Ascending aorta (tissue), 2 donors: ENCODE measurements at regions of chr1 and their contacts with region 1.

Region 1: DNA sequence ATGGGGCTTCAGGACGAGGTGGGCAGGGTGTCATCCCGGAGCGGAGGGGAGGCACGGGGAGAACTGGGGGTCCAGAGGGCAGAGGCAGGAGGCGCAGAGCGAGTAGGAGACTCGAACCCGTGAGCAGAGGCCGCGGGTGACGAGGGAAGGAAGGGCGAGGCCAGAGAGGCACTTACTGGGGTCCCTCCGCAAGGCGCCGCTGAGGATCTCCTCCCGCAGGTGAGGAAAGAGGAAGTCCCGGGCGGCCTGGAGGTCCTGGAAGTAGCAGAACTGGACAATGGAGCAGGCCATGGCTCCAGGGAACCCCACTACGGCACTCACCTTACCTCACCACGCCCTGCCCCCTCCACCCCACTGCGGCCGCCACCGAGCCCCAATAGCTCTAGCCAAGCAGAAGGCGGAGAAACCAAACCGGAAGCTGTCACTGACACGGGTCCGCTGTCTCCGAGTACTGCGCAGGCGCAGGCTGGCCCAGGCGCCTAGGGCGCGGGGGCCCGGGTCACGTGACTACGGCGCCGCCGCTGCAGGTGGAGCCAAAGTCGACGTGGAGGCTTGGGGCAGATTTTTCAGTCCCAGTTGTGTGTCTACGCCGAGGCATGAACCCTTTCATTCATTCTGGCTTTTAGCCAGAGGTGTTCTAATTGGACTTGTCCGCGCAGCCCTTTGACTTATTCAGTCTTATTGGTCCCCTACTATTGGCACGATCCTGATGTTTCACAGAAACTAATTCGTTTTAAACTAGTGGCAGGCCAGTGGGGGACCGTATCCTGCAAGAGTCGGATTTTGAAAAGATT is at the start of gene RAB3GAP2:
- DNase-seq: peak; percentile 80 to 97
- H3K4me3 ChIP-seq: peak within 1 kb of the TSS; percentile 79 to 89
- H3K27ac ChIP-seq: peak within 1 kb of the TSS; percentile 76 to 85
- H3K4me1 ChIP-seq: peaks cover 0 to 13% of the 10 kb centered on the region in 2 donors
- H3K27me3 ChIP-seq: no peaks in the 10 kb centered on the region
- CTCF ChIP-seq: no peak
- total RNA-seq, gene RAB3GAP2: 9.8 TPM

Region 2: GRCh38 chr1:220089650-220090556 is 182.3 kb before region 1 on chr1 and contains the start of gene BPNT1:
- intact Hi-C with region 1: loop called (anchors 2 kb)
- DNase-seq: peak; percentile 74 to 97
- H3K4me3 ChIP-seq: peak within 1 kb of the TSS; percentile 56 to 71
- H3K27ac ChIP-seq: peak within 1 kb of the TSS in 1 of 2 donors; percentile 59
- H3K4me1 ChIP-seq: peaks cover 0 to 2% of the 10 kb centered on the region in 2 donors
- H3K27me3 ChIP-seq: no peaks in the 10 kb centered on the region
- CTCF ChIP-seq: no peak
- total RNA-seq, gene BPNT1: 5.4 TPM

Region 3: DNA sequence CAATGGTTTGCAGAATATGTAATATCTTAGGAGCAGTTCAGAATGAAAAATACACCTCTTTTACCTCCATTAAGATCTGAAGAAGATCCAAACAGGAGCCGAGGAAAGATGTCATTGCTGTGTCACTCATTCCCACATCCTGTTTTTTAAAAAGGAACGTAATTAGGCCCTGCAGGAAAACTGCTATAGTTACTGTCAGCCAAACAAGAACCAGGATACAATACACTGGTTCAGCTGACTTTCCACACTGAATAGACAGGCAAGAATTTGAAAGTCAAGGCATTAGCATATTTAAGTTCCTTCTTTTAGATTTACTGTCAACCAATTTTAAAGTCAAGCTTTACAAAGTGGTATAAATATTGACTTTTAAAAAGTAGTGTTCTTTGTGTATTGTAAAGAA is 114.5 kb before region 1 on chr1:
- intact Hi-C with region 1: no loop called
- DNase-seq: no peak
- H3K4me3 ChIP-seq: no peak overlapping the region
- H3K27ac ChIP-seq: no peak overlapping the region
- H3K4me1 ChIP-seq: no peaks in the 10 kb centered on the region
- H3K27me3 ChIP-seq: no peaks in the 10 kb centered on the region
- CTCF ChIP-seq: no peak

Region 4: DNA sequence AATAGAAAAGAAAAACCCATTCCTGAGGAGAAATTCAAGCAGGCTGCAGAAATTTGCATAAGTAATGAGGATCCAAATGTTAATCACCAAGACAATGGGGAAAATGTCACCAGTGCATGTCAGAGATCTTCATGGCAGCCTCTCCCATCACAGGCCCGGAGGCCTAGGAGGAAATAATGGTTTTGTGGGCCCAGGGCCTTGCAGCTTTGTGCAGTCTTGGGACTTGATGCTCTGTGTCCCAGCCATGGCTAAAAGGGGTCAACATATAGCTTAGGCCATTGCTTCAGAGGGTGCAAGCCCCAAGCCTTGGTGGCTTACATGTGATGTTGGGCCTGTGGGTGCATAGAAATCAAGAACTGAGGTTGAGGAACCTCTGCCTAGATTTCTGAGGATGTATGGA is 22.7 kb before region 1 on chr1:
- intact Hi-C with region 1: no loop called
- DNase-seq: no peak
- H3K4me3 ChIP-seq: no peak overlapping the region
- H3K27ac ChIP-seq: no peak overlapping the region
- H3K4me1 ChIP-seq: no peaks in the 10 kb centered on the region
- H3K27me3 ChIP-seq: no peaks in the 10 kb centered on the region
- CTCF ChIP-seq: no peak

Region 5: DNA sequence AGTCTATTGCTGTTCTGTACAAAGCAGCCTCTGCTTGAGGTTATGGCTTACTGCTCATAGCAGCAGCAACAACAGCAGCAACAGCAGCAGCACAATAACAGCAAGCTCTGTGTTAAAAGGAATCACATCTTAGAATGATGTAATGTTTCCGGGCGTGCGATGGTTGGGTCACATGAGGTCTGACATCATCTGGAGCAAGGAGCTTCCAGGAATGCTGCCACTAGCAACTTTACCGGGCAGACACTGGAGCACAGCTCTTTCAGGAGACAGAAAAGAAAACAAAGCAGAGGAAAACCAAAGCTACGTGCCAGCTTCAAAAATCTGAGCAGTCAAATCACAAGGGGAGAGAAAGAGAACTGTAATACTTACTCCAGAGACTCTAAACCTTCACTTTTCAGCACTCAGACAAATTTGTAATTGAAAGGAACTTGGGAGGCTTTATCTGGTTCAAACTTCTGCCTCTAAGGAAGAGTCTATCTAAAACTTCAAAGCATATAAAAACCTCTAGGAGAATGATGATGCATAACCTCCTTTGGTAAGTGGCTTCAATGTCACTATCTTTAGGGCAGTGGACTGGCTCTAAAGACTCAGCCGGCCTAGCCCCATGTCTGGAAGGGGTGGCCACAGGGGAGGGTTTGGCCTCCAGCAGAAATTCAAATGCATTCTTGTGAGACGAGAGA is 28.3 kb after region 1 on chr1:
- intact Hi-C with region 1: loop called (anchors 2 kb)
- DNase-seq: peak; percentile 54 to 90
- H3K4me3 ChIP-seq: peak overlapping the region in 1 of 2 donors; percentile 42
- H3K27ac ChIP-seq: peak overlapping the region; percentile 79 to 81
- H3K4me1 ChIP-seq: peaks cover 0 to 2% of the 10 kb centered on the region in 2 donors
- H3K27me3 ChIP-seq: no peaks in the 10 kb centered on the region
- CTCF ChIP-seq: no peak

Region 6: DNA sequence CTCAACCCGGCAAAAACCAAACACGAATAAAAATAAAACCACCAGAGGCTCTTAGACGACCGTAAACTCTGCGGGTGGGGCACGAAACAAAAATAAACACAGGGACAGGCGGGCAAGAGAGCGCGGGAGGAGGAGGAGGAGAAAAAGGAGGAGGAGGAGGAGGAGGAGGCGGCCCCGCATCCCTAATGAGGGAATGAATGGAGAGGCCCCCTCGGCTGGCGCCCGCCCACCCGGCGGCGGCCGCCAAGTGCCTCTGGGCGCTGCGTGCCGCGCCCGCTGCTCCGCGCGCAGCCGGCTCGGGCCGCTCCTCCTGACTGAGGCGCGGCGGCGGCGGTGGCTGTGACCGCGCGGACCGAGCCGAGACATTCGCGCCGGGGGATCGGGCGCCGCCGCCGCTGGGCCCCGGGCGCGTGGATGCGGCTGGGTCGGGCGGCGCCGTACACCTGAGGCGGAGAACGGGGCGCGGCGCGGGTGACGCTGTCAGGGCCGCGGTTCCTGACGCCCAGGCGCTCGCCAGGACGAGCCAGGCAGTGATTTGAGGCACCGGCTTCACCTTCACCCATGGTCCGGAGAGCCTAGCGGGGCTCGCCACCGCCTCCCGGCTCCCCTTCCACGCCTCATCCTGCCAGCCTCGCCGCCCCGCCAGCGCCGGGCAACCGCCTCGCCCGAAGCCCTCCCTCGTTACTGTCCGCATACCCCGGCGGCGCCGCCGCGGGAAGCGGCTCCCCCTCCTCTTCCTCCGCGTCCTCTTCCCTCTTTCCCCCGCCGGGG is 255.8 kb after region 1 on chr1 and contains the start of gene MARK1:
- intact Hi-C with region 1: loop called (anchors 2 kb)
- DNase-seq: peak in 1 of 2 donors; percentile 80
- H3K4me3 ChIP-seq: peak within 1 kb of the TSS; percentile 85 to 86
- H3K27ac ChIP-seq: peak within 1 kb of the TSS; percentile 85 to 89
- H3K4me1 ChIP-seq: no peaks in the 10 kb centered on the region
- H3K27me3 ChIP-seq: no peaks in the 10 kb centered on the region
- CTCF ChIP-seq: no peak
- total RNA-seq, gene MARK1: 11.6 TPM

Region 7: GRCh38 chr1:220776720-220777326 is 504.6 kb after region 1 on chr1:
- intact Hi-C with region 1: loop called (anchors 10 kb)
- DNase-seq: peak in 1 of 2 donors; percentile 86
- H3K4me3 ChIP-seq: no peak overlapping the region
- H3K27ac ChIP-seq: no peak overlapping the region
- H3K4me1 ChIP-seq: no peaks in the 10 kb centered on the region
- H3K27me3 ChIP-seq: no peaks in the 10 kb centered on the region
- CTCF ChIP-seq: peak; percentile 74 to 90 (median 84)